Thyroid gland (tissue), 4 donors: ENCODE measurements at regions of chr2 and their contacts with region 1.

Region 1: GRCh38 chr2:27370026-27370815 is at the starts of genes EIF2B4 and SNX17:
- DNase-seq: peak; percentile 99 to 100
- H3K4me3 ChIP-seq: peak within 1 kb of the TSS; percentile 81 to 94 (median 86)
- H3K27ac ChIP-seq: peak within 1 kb of the TSS; percentile 75 to 83 (median 82)
- H3K4me1 ChIP-seq: peaks cover 18 to 25% of the 10 kb centered on the region in 2 donors
- H3K27me3 ChIP-seq: no peaks in the 10 kb centered on the region
- CTCF ChIP-seq: peak in 5 of 6 experiments; percentile 31 to 88 (median 81)
- POLR2A ChIP-seq: peak; percentile 47 to 83
- total RNA-seq, gene EIF2B4: 34.7 to 44.0 (median 38.6) TPM
- total RNA-seq, gene SNX17: 109 to 148 (median 130) TPM

Region 2: GRCh38 chr2:27356382-27357181 is 13.6 kb before region 1 on chr2 and contains the start of gene GTF3C2:
- intact Hi-C with region 1: loop called (anchors 2 kb)
- DNase-seq: peak; percentile 96 to 97
- H3K4me3 ChIP-seq: peak within 1 kb of the TSS; percentile 33 to 99 (median 73)
- H3K27ac ChIP-seq: peak within 1 kb of the TSS; percentile 79 to 91 (median 85)
- H3K4me1 ChIP-seq: peaks cover 22 to 30% of the 10 kb centered on the region in 2 donors
- H3K27me3 ChIP-seq: no peaks in the 10 kb centered on the region
- CTCF ChIP-seq: peak in 3 of 6 experiments; percentile 11 to 31 (median 19)
- POLR2A ChIP-seq: peak in 1 of 2 donors; percentile 63
- total RNA-seq, gene GTF3C2: 44.7 to 86.6 (median 51.8) TPM

Region 3: DNA sequence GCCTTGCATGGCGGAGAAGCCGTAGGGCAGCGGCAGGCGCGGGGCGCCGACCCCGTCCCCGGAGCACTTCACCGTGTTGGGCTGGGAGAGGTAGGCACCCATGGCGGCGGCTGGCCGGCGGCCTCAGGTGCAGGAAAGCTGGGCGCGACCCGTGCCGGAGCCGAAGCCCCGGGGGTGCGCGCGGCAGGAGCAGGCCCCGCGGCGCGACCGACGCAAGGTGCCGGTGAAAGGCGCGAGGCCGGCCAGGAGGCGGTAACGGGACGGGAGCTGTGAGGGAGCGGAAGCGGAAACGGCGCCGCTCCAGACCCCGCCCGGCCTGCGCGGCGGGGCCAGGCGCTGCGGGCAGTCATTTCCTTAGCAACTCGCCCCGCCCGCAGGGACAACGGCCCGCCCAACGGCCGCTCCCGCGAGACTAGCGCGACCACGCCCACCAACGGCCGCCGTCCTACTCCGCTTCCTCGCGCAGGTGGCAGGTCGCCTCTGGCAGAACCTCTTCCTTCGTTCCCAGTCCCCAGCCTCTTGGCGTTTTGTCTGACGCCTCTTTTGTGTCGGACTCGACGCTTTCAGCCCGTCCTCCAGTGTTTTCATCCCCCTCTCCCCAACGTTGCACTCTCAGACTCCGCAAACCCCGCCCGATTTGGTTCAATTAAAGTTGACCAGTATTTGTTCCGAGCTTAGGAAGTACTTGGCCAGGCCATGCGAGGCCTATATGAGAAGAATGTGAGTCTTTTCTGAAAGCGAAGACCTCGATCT is 39.3 kb after region 1 on chr2 and contains the start of gene PPM1G:
- intact Hi-C with region 1: loop called (anchors 5 kb)
- DNase-seq: peak; percentile 96
- H3K4me3 ChIP-seq: peak within 1 kb of the TSS; percentile 96 to 100 (median 97)
- H3K27ac ChIP-seq: peak within 1 kb of the TSS; percentile 54 to 80 (median 58)
- H3K4me1 ChIP-seq: peaks cover 10 to 18% of the 10 kb centered on the region in 2 donors
- H3K27me3 ChIP-seq: no peaks in the 10 kb centered on the region
- CTCF ChIP-seq: peak in 1 of 6 experiments; percentile 10
- POLR2A ChIP-seq: peak in 1 of 2 donors; percentile 86
- total RNA-seq, gene PPM1G: 55.4 to 75.2 (median 59.5) TPM